Naive thymus-derived CD4-positive, alpha-beta T cell (primary cell): ENCODE measurements at regions of chr19 and their contacts with region 1.

Region 1: DNA sequence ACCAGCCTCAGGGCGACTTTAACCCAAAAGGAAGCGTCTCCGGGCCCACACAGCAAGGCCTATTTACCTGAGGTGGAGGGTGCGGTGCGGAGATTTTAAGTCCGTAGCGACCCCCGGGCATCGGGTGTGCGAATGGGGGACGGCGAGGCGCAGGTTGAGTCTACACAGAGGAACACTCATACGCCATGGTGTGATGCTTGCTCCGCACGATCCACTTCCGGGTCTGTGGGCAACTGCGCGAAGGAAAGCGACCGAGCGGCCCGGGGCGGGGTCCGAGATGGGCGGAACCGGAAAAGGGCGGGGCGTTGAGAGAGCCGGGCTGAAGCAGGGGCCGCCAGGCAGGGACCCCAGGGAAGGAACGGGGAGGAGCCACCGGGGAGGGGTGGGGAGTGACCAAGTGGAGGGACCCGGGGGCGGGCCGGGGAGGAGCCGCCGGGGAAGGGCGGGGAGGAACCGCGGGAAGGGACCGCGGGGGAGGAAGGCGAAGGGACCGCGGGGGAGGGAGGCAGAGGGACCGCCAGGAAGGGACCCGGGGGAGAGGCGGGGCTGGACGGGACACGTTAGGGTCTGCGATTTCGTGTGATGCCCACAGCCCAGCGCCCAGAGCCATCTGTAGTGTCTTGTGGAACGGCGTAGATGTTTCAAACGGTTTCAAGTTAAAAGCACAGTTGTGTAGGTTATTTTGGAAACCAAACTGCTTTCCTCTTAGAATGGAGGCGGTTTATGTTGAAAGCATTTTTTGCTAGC is at the start of gene ZNF160:
- DNase-seq: peak; percentile 95 to 99 (median 97)
- ATAC-seq: peak; percentile 99
- H3K4me3 ChIP-seq: peak within 1 kb of the TSS; percentile 99
- H3K4me3 Mint-ChIP-seq: peak within 1 kb of the TSS; percentile 85 to 97 (median 88)
- H3K27ac ChIP-seq: peak within 1 kb of the TSS; percentile 89
- H3K27ac Mint-ChIP-seq: peak within 1 kb of the TSS; percentile 79 to 98 (median 94)
- H3K4me1 ChIP-seq: peaks cover 13 to 15% of the 10 kb centered on the region in 2 donors
- H3K4me1 Mint-ChIP-seq: peaks cover 22 to 37% (median 34%) of the 10 kb centered on the region in 7 donors
- H3K27me3 ChIP-seq: no peaks in the 10 kb centered on the region
- H3K27me3 Mint-ChIP-seq: no peaks in the 10 kb centered on the region
- total RNA-seq, gene ZNF160: 39.1 to 75.3 (median 52.9) TPM

Region 2: DNA sequence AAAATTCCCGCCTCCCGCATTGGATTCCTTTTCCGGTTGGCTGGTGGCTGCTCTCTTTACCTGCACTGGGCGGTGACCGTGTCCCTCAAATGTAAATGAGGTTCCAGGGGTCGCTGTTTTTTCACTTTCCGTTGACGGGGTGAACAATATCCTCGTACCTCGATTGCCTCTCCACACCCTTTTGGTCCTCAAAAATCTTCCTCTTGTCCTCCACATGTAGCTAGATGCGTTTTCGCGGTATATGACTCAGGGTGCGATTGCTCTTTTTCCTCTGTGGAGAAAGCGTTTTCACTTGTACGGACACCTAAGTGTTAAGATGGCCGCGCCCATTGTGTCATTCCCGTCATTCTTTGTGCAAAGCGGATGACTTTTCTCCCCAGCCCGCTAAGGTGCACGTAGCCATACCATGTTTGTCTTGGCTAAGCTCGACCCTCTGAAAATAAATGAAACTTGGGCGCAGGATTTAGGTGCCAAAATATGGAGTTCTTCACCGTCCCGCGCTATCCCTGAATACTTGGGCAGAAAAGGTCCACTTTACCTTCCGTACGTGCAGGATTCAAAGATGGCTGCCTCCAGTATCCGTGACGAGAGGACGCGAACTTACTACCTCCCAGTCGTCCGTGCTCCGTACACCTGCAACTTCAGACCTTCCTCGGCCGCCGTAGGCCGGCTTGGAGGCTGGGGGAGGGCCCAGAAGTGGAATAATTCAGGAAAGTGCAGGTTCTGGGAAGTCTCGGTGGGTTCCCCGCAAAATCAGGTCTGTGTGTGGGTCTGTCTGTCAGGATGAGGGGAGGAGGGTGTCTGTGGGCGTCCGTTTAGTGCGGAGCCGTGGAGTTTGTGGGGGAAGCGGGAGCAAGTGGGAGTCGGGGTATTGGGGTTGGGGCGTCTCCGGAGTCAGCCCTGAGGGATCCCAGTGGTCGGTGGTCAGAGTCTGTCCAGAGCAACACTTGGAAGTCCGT is 1176.3 kb before region 1 on chr19 and contains the start of gene ZNF613:
- CTCF ChIA-PET with region 1: no interaction called
- POLR2A ChIA-PET with region 1: no interaction called
- intact Hi-C with region 1: loop called in 1 of 2 experiments (anchors 1 kb)
- DNase-seq: peak; percentile 65 to 87 (median 83)
- ATAC-seq: peak; percentile 92
- H3K4me3 ChIP-seq: peak within 1 kb of the TSS; percentile 70
- H3K4me3 Mint-ChIP-seq: peak within 1 kb of the TSS; percentile 90 to 100 (median 97)
- H3K27ac ChIP-seq: peak within 1 kb of the TSS; percentile 77
- H3K27ac Mint-ChIP-seq: peak within 1 kb of the TSS; percentile 87 to 96 (median 92)
- H3K4me1 ChIP-seq: peaks cover 4% of the 10 kb centered on the region in 2 donors
- H3K4me1 Mint-ChIP-seq: peaks cover 19 to 41% (median 36%) of the 10 kb centered on the region in 7 donors
- H3K27me3 ChIP-seq: no peaks in the 10 kb centered on the region
- H3K27me3 Mint-ChIP-seq: no peaks in the 10 kb centered on the region
- total RNA-seq, gene ZNF613: 1.5 to 9.6 (median 5.2) TPM

Region 3: DNA sequence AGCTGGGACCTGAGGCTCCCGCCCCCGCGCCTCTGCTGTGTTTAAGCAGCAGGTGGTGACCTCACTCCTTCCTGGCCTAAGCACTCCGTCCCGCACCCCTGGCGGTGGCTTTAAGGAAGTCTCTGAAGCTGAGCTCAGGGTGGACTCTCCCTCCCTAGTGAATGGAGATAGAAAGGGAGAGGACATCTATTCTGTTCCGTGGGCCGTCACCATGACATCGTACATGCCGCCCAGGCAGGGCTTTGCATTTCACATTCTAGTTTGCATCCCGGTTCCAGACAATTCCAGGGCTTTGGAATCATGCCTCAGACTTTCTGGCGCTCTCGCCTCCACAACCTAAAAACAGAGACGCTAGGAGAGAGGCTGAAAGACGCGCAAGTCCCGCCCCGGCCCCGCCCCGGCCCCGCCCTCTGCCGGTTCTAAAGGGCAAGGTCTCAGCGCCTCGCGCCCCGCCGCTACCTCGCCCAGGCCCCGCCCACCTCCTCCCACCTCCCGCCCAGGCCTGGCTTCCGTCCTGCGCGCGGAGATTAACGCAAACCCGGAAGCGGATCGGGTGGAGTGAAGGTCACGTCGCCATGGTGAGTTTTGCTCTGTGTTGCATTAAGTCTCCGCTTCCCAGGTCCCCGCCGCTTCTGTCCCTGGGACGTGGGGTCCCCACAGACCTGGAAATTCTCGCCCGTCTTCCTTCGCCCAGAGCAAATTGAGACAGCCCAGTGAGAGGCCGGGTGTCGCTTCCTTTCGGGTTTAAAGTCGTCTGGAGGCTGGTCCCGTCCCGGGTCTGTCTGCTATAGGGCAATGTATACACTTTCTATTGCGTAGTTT is 576.0 kb before region 1 on chr19 and contains the start of gene ZNF808:
- CTCF ChIA-PET with region 1: no interaction called
- POLR2A ChIA-PET with region 1: no interaction called
- intact Hi-C with region 1: loop called (anchors 1 kb)
- DNase-seq: peak; percentile 79 to 95 (median 90)
- ATAC-seq: peak; percentile 99
- H3K4me3 ChIP-seq: peak within 1 kb of the TSS; percentile 99
- H3K4me3 Mint-ChIP-seq: peak within 1 kb of the TSS; percentile 91 to 100 (median 98)
- H3K27ac ChIP-seq: peak within 1 kb of the TSS; percentile 91
- H3K27ac Mint-ChIP-seq: peak within 1 kb of the TSS; percentile 84 to 99 (median 98)
- H3K4me1 ChIP-seq: peaks cover 9 to 12% of the 10 kb centered on the region in 2 donors
- H3K4me1 Mint-ChIP-seq: peaks cover 18 to 34% (median 25%) of the 10 kb centered on the region in 7 donors
- H3K27me3 ChIP-seq: no peaks in the 10 kb centered on the region
- H3K27me3 Mint-ChIP-seq: no peaks in the 10 kb centered on the region
- total RNA-seq, gene ZNF808: 17.7 to 52.4 (median 33.7) TPM

Region 4: DNA sequence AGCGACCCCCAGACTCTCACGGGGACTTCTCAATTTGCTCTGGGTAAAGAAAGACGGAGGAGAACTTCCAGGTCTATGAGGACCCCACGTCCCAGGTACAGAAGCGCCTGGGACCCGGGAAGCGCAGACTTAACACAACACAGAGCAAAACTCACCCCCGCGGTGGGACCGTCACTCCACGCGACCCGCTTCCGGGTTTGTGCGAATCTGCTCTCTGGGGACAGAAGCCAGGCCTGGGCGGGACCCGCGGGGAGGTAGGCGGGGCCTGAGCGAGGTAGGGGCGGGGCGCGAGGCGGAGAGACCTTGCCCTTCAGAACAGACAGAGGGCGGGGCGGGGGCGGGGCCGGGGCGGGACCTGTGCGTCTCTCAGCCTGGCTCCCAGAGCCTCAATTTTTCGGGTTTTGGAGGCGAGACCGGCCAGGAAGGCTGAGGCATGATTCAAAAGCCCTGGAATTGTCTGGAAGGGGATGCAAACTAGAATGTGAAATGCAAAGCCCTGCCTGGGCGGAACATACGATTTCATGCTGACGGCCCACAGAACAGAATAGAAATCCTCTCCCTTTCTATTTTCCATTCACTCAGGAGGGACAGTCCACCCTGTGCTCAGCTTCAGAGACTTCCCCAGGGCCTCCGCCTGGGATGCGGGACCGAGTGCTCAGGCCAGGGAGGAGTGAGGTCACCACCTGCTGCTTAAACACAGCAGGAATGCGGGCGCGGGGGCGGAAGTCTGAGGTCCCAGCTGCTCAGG is 160.8 kb before region 1 on chr19:
- CTCF ChIA-PET with region 1: no interaction called
- POLR2A ChIA-PET with region 1: no interaction called
- intact Hi-C with region 1: loop called (anchors 1 to 2 kb)
- DNase-seq: peak; percentile 88 to 99 (median 95)
- ATAC-seq: peak; percentile 100
- H3K4me3 ChIP-seq: peak overlapping the region; percentile 98
- H3K4me3 Mint-ChIP-seq: peak overlapping the region; percentile 87 to 95 (median 92)
- H3K27ac ChIP-seq: peak overlapping the region; percentile 85
- H3K27ac Mint-ChIP-seq: peak overlapping the region; percentile 33 to 94 (median 89)
- H3K4me1 ChIP-seq: peaks cover 0 to 4% of the 10 kb centered on the region in 2 donors
- H3K4me1 Mint-ChIP-seq: peaks cover 12 to 27% (median 16%) of the 10 kb centered on the region in 7 donors
- H3K27me3 ChIP-seq: no peaks in the 10 kb centered on the region
- H3K27me3 Mint-ChIP-seq: no peaks in the 10 kb centered on the region

Region 5: GRCh38 chr19:53037101-53038097 is 66.0 kb before region 1 on chr19:
- CTCF ChIA-PET with region 1: no interaction called
- POLR2A ChIA-PET with region 1: no interaction called
- intact Hi-C with region 1: no loop called
- DNase-seq: no peak
- ATAC-seq: no peak
- H3K4me3 ChIP-seq: no peak overlapping the region
- H3K4me3 Mint-ChIP-seq: peak overlapping the region in 8 of 10 donors; percentile 16 to 68 (median 46)
- H3K27ac ChIP-seq: no peak overlapping the region
- H3K27ac Mint-ChIP-seq: peak overlapping the region in 1 of 9 donors; percentile 14
- H3K4me1 ChIP-seq: no peaks in the 10 kb centered on the region
- H3K4me1 Mint-ChIP-seq: peaks cover 0 to 8% (median 0%) of the 10 kb centered on the region in 7 donors
- H3K27me3 ChIP-seq: no peaks in the 10 kb centered on the region
- H3K27me3 Mint-ChIP-seq: peaks cover 0 to 56% (median 19%) of the 10 kb centered on the region in 5 donors

Region 6: DNA sequence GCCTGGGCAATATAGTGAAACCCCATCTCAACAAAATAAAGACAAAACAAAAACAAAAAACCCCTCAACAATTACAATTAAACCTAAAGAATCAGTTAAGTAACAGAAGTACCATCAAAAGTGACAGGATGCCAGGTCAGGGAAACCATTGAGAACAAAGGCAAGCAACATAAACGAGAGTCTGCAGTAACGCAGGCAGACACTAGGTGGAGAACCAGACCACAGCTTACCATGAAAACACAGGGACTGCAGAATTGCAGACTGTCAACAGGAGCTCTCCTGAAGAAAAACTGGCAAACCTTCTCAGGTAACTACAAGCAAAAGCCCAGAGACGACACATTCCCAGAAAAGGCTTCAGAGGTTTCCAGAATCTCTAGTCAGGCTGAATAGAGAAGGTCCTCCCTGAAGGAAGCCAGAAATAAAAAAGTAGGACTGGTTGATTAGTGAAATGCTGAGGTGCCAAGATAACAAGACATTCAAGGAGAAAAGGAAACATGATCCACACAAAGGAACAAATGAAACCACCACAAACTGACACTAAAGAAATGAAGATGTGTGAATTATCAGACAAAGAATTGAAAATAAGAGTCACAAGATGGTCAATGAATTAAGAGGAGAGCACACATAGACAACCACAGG is 92.0 kb after region 1 on chr19:
- CTCF ChIA-PET with region 1: no interaction called
- POLR2A ChIA-PET with region 1: no interaction called
- intact Hi-C with region 1: loop called (anchors 1 kb)
- DNase-seq: peak; percentile 39 to 86 (median 77)
- ATAC-seq: peak; percentile 53
- H3K4me3 ChIP-seq: no peak overlapping the region
- H3K4me3 Mint-ChIP-seq: peak overlapping the region; percentile 4 to 93 (median 64)
- H3K27ac ChIP-seq: no peak overlapping the region
- H3K27ac Mint-ChIP-seq: peak overlapping the region; percentile 30 to 96 (median 64)
- H3K4me1 ChIP-seq: peaks cover 9% of the 10 kb centered on the region in 2 donors
- H3K4me1 Mint-ChIP-seq: peaks cover 17 to 57% (median 46%) of the 10 kb centered on the region in 7 donors
- H3K27me3 ChIP-seq: no peaks in the 10 kb centered on the region
- H3K27me3 Mint-ChIP-seq: no peaks in the 10 kb centered on the region

Region 7: DNA sequence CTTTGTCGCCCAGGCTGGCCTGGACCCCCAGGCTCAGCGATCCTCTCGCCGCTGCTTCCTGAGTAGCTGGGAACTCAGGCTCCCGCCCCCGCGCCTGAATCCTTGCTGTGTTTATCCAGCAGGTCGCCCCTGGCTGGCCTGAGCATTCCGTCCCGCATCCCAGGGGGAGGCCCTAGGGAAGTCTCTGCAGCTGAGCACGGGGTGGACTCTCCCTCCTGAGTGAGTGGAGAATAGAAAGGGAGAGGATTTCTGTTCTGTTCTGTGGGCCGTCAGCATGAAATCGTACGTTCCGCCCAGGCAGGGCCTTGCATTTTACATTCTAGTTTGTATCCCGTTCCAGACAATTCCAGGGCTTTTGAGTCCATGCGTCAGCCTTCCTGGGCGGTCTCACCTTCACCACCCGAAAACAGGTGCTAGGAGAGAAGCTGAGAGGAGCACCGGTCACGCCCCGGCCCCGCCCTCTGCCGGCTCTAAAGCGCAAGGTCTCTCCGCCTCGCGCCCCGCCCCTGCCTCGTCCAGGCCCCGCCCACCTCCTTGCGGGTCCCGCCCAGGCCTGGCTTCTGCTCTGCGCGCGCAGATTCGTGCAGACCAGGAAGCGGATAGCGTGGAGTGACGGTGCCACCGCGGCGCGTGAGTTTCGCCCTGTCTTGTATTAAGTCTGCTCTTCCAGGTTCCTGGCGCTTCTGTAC is 328.2 kb after region 1 on chr19 and contains the start of gene ZNF761:
- CTCF ChIA-PET with region 1: no interaction called
- POLR2A ChIA-PET with region 1: no interaction called
- intact Hi-C with region 1: loop called in 1 of 2 experiments (anchors 1 kb)
- DNase-seq: peak; percentile 94 to 99 (median 98)
- ATAC-seq: peak; percentile 100
- H3K4me3 ChIP-seq: peak within 1 kb of the TSS; percentile 91
- H3K4me3 Mint-ChIP-seq: peak within 1 kb of the TSS; percentile 94 to 99 (median 97)
- H3K27ac ChIP-seq: peak within 1 kb of the TSS; percentile 79
- H3K27ac Mint-ChIP-seq: peak within 1 kb of the TSS; percentile 90 to 99 (median 96)
- H3K4me1 ChIP-seq: peaks cover 6 to 16% of the 10 kb centered on the region in 2 donors
- H3K4me1 Mint-ChIP-seq: peaks cover 20 to 55% (median 35%) of the 10 kb centered on the region in 7 donors
- H3K27me3 ChIP-seq: no peaks in the 10 kb centered on the region
- H3K27me3 Mint-ChIP-seq: no peaks in the 10 kb centered on the region
- total RNA-seq, gene ZNF761: 8.0 to 18.8 (median 13.1) TPM